ENCODE measurements at regions of chr1 and their contacts with region 1.

Region 1: GRCh38 chr1:162605225-162605927 is 26.9 kb upstream of the DDR2 start:
- DNase-seq: no peak
- CTCF ChIP-seq: no peak

Region 2: DNA sequence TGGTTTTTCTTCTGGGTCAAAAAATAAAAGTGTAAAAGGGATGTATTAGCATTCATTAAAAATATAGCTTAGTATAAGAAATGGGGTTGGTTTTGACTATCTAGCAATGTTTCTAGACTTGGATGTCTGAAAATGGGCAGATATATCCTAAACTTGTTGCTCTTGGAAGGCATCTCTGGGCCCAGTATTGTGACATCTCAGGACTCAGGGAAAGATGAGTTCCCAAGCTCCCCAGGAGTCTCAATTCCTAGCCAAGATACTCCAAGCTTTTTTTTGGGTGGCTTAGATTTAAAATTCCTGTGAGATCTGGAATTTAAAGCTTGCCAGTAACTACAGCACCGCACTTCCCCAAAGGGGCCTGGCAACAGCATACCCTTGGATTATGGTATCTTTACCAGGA is 173.7 kb after region 1 on chr1:
- in situ Hi-C with region 1: loop called (anchors 25 kb)
- DNase-seq: no peak
- CTCF ChIP-seq: no peak

Measured in GM13976 (cell line).